T-cell (primary cell): ENCODE measurements at regions of chr4 and their contacts with region 1.

Region 1: DNA sequence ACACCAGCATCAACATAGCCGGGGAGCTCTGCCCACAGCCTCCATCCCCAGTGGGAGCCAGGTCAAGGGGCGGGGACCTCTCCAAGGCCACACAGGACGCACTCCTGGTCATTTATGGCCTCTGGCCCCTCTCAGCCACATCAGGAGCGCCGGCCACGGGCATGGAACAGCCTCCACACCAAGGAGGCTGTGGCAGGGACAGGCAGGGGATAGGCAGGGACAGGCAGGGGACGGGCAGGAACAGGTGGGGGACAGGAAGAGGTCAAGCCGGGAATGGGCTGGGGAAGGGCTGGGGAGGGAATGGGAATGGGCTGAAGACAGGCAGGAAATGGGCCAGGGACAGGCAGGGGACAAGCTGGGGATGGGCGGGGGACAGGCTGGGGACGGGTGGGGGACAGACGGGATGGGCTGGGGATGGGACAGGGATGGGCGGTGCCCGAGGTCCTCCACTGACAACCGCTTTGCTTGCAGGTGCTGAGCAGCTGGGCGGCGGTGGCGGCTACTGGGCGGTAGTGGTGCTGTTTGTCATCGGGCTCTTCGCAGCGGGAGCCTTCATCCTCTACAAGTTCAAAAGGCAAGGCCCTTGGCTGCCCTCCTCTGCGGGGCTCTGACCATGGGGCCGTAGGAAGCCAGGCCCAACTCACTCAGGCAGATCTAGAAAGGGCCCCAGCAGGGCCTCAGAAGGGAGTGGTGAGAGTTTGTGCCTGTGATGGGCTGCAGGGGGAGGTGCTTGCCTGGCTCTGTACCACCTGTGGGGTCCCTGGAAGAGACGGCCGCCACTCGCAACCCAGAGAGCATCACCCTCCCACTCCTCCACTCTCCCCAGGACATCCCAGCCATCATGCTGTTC is 205.6 kb downstream of the AFAP1 start:
- DNase-seq: no peak
- ATAC-seq: no peak
- H3K4me3 ChIP-seq: no peak overlapping the region
- H3K4me3 Mint-ChIP-seq: no peak overlapping the region
- H3K27ac ChIP-seq: no peak overlapping the region
- H3K27ac Mint-ChIP-seq: no peak overlapping the region
- H3K4me1 ChIP-seq: no peaks in the 10 kb centered on the region
- H3K4me1 Mint-ChIP-seq: no peaks in the 10 kb centered on the region
- H3K27me3 ChIP-seq: peaks cover 0 to 11% of the 10 kb centered on the region in 2 experiments
- H3K27me3 Mint-ChIP-seq: no peaks in the 10 kb centered on the region

Region 2: GRCh38 chr4:7701866-7702649 is 32.0 kb before region 1 on chr4:
- CTCF ChIA-PET with region 1: interaction called in 1 of 2 experiments, 10 read pairs
- POLR2A ChIA-PET with region 1: no interaction called
- DNase-seq: no peak
- ATAC-seq: no peak
- H3K4me3 ChIP-seq: no peak overlapping the region
- H3K4me3 Mint-ChIP-seq: no peak overlapping the region
- H3K27ac ChIP-seq: no peak overlapping the region
- H3K27ac Mint-ChIP-seq: no peak overlapping the region
- H3K4me1 ChIP-seq: peaks cover 0 to 3% of the 10 kb centered on the region in 2 experiments
- H3K4me1 Mint-ChIP-seq: no peaks in the 10 kb centered on the region
- H3K27me3 ChIP-seq: peaks cover 0 to 36% of the 10 kb centered on the region in 2 experiments
- H3K27me3 Mint-ChIP-seq: peaks cover 9 to 27% of the 10 kb centered on the region in 2 donors